Caco-2 (cell line): ENCODE measurements at regions of chr3 and their contacts with region 1.

Region 1: DNA sequence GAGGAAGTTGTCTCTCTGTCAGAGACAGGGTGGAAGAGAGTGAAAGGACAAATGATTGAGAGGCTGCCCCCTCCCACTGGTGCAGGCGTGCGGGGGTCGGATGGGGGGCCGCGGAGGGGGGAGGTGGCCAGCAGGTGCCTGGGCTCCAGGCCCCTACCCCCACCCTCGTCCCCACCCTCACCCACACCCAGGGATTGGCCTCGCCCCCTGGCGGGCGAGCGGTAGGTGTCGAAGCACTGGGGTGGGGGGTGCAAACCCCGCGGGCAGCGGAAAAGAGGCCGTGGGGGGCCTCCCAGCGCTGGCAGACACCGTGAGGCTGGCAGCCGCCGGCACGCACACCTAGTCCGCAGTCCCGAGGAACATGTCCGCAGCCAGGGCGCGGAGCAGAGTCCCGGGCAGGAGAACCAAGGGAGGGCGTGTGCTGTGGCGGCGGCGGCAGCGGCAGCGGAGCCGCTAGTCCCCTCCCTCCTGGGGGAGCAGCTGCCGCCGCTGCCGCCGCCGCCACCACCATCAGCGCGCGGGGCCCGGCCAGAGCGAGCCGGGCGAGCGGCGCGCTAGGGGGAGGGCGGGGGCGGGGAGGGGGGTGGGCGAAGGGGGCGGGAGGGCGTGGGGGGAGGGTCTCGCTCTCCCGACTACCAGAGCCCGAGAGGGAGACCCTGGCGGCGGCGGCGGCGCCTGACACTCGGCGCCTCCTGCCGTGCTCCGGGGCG is at the start of gene KAT2B:
- DNase-seq: peak; percentile 72 to 78
- H3K4me3 ChIP-seq: peak within 1 kb of the TSS; percentile 87
- H3K4me3 Mint-ChIP-seq: peak within 1 kb of the TSS; percentile 90
- H3K27ac Mint-ChIP-seq: peak within 1 kb of the TSS; percentile 59
- H3K4me1 ChIP-seq: 0 out of 2 replicates have a peak, but pooled peaks cover 7% of the 10 kb centered on the region
- H3K4me1 Mint-ChIP-seq: peaks cover 25% of the 10 kb centered on the region
- H3K27me3 ChIP-seq: no peaks in the 10 kb centered on the region
- H3K27me3 Mint-ChIP-seq: no peaks in the 10 kb centered on the region
- CTCF ChIP-seq: peak; percentile 68 to 88
- total RNA-seq, gene KAT2B: 8.1 and 9.8 TPM in 2 replicates

Region 2: DNA sequence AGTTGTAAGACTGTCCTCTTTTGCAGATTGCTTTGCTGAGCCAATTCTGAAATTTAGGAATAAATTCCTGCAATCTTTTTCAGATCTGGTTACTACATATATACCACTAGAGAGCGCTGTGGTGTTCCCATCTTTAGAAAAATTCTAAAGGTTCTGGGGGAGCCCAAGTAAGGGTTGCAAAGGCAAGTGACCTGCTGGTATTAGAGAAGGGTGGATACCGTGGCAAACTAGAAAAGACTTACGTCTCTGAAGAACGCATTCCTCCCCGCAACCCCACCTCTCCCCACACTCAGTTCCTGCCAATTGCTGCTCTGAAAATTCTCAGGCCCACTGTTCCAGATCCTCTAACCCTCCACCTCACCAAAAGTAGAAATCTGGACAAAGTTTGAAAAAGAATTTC is 154.5 kb before region 1 on chr3:
- CTCF ChIA-PET with region 1: no interaction called
- POLR2A ChIA-PET with region 1: no interaction called
- intact Hi-C with region 1: loop called (anchors 1 kb)
- DNase-seq: peak in 1 of 2 experiments; percentile 28
- H3K4me3 ChIP-seq: no peak overlapping the region
- H3K4me3 Mint-ChIP-seq: no peak overlapping the region
- H3K27ac Mint-ChIP-seq: no peak overlapping the region
- H3K4me1 ChIP-seq: no peaks in the 10 kb centered on the region
- H3K4me1 Mint-ChIP-seq: no peaks in the 10 kb centered on the region
- H3K27me3 ChIP-seq: no peaks in the 10 kb centered on the region
- H3K27me3 Mint-ChIP-seq: no peaks in the 10 kb centered on the region
- CTCF ChIP-seq: peak; percentile 40 to 65

Region 3: GRCh38 chr3:20185701-20186598 is 146.0 kb after region 1 on chr3 and contains the start of gene SGO1:
- CTCF ChIA-PET with region 1: no interaction called
- POLR2A ChIA-PET with region 1: no interaction called
- intact Hi-C with region 1: loop called (anchors 1 kb)
- DNase-seq: peak; percentile 98
- H3K4me3 ChIP-seq: peak within 1 kb of the TSS; percentile 92
- H3K4me3 Mint-ChIP-seq: no peak within 1 kb of the TSS
- H3K27ac Mint-ChIP-seq: no peak within 1 kb of the TSS
- H3K4me1 ChIP-seq: peaks cover 5% of the 10 kb centered on the region; the same call in 1 of the 2 replicates
- H3K4me1 Mint-ChIP-seq: no peaks in the 10 kb centered on the region
- H3K27me3 ChIP-seq: no peaks in the 10 kb centered on the region
- H3K27me3 Mint-ChIP-seq: no peaks in the 10 kb centered on the region
- CTCF ChIP-seq: no peak
- total RNA-seq, gene SGO1: 24.2 and 27.2 TPM in 2 replicates

Region 4: GRCh38 chr3:20246662-20247061 is 206.7 kb after region 1 on chr3:
- CTCF ChIA-PET with region 1: no interaction called
- POLR2A ChIA-PET with region 1: no interaction called
- intact Hi-C with region 1: no loop called
- DNase-seq: no peak
- H3K4me3 ChIP-seq: no peak overlapping the region
- H3K4me3 Mint-ChIP-seq: no peak overlapping the region
- H3K27ac Mint-ChIP-seq: no peak overlapping the region
- H3K4me1 ChIP-seq: no peaks in the 10 kb centered on the region
- H3K4me1 Mint-ChIP-seq: no peaks in the 10 kb centered on the region
- H3K27me3 ChIP-seq: no peaks in the 10 kb centered on the region
- H3K27me3 Mint-ChIP-seq: no peaks in the 10 kb centered on the region
- CTCF ChIP-seq: no peak

Region 5: DNA sequence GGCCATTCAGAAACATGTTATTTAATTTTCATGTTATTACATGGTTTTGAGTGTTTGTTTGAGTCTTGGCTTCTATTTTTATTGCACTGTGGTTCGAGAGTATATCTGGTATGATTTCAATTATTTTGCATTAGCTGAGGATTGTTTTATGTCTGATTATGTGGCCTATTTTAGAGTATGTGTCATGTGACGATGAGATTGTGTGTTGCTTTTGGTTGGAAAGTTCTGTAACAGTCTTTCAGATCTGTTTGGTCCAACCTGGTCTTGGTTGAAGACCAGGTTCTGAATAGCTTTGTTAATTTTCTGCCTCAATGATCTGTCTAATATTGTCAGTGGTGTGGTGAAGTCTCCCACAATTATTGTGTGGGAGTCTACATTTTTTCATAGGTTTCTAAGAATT is 909.4 kb after region 1 on chr3:
- CTCF ChIA-PET with region 1: no interaction called
- POLR2A ChIA-PET with region 1: no interaction called
- intact Hi-C with region 1: no loop called
- DNase-seq: no peak
- H3K4me3 ChIP-seq: no peak overlapping the region
- H3K4me3 Mint-ChIP-seq: no peak overlapping the region
- H3K27ac Mint-ChIP-seq: no peak overlapping the region
- H3K4me1 ChIP-seq: no peaks in the 10 kb centered on the region
- H3K4me1 Mint-ChIP-seq: no peaks in the 10 kb centered on the region
- H3K27me3 ChIP-seq: no peaks in the 10 kb centered on the region
- H3K27me3 Mint-ChIP-seq: no peaks in the 10 kb centered on the region
- CTCF ChIP-seq: no peak